ENCODE measurements at regions of chr20 and their contacts with region 1.

Region 1: DNA sequence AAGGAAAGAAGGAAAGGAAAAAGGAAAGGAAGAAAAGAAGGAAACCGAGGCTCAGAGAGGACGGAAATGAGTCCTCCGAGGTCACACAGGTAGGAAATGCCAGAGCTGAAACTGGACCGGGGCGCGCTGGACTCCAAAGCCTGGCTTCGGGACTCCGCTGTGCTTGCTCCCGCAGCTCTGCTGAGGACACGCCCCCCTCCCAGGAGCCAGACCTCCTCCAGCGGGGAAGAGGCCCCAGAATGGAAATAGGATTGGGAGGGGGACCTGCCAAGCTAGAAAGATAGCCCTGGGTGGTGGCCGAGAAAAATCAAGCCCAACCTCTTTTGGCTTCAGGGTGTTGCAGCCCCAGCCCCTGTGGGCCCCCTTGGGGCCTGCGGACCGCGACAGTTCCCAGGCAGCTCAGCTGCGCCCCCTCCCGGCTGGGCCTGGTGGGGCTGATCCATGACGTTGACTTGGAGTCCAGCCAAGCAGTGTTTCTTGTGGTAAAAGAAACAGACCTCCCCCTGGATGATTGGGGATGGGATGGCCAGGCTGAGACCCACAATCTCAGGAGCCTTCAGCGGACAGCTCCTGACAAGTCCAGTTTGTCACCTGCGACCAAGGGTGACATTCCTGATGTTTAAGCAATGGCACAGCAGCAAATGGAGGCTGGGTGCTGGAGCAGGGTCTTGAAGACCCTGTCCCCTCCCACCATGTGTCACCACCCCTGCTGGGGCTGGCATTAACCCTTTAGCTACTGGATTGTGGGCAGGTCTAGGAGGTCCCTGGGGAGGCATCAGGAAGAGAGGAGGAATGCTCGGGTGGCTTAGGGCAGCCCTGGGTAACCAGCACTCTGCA is 55.5 kb downstream of the RIPOR3 start:
- DNase-seq: no peak
- ATAC-seq: peak; percentile 86
- H3K4me3 ChIP-seq: no peak overlapping the region
- H3K27ac ChIP-seq: no peak overlapping the region
- H3K4me1 ChIP-seq: no peaks in the 10 kb centered on the region
- H3K27me3 ChIP-seq: no peaks in the 10 kb centered on the region; a peak in 1 of 4 replicates
- CTCF ChIP-seq: peak; percentile 67 to 92 (median 87)
- EP300 ChIP-seq: no peak
- POLR2A ChIP-seq: no peak
- RAD21 ChIP-seq: peak; percentile 58

Region 2: GRCh38 chr20:50478162-50479036 is 157.5 kb before region 1 on chr20:
- CTCF ChIA-PET with region 1: interaction called, 5 read pairs
- POLR2A ChIA-PET with region 1: no interaction called
- RAD21 ChIA-PET with region 1: no interaction called
- SMC1A ChIA-PET with region 1: no interaction called
- in situ Hi-C with region 1: no loop called
- intact Hi-C with region 1: loop called (anchors 5 kb)
- DNase-seq: no peak
- ATAC-seq: peak; percentile 99
- H3K4me3 ChIP-seq: no peak overlapping the region
- H3K27ac ChIP-seq: no peak overlapping the region
- H3K4me1 ChIP-seq: peaks cover 21% of the 10 kb centered on the region
- H3K27me3 ChIP-seq: no peaks in the 10 kb centered on the region
- CTCF ChIP-seq: peak; percentile 60 to 87 (median 84)
- EP300 ChIP-seq: no peak
- POLR2A ChIP-seq: no peak
- RAD21 ChIP-seq: peak; percentile 79

Measured in GM12878 (cell line).